A549 (cell line): ENCODE measurements at regions of chr2 and their contacts with region 1.

Region 1: DNA sequence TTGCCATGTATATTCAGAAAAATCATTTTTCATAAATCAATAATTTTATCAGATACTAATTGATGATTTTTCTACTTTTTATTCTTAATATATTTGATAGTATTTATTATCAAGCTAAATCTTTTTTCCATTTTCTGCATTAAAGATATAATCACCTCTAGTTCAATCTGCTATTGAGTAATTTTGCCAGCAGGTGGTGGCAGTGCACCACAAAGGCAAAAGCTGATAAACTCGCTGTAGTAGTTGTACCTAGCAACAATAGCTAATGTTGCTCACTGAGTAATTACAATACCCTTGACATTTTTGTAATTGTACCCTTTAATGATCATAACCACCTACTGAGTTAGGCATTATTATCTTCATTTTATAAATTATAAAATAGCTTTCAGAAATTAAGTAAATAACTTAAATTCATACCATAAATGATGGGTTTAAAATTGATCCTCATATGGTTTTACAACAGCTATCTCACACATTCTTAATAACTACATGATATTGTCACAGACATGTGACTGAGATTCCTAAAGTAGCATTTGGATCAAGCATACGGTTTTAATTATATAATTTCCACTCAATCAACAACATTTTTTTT is 52.0 kb upstream of the CALCRL start:
- DNase-seq: peak; percentile 19 to 74
- ATAC-seq: peak in 1 of 2 experiments; percentile 67; a peak in 3 of 6 replicates
- H3K4me3 ChIP-seq: no peak overlapping the region
- H3K27ac ChIP-seq: peak overlapping the region in 1 of 2 experiments; percentile 75; a peak in 3 of 6 replicates
- H3K4me1 ChIP-seq: peaks cover 52% of the 10 kb centered on the region
- CTCF ChIP-seq: peak; percentile 98
- EP300 ChIP-seq: no peak
- POLR2A ChIP-seq: no peak
- RAD21 ChIP-seq: peak; percentile 99 to 100

Region 2: GRCh38 chr2:187541086-187542085 is 41.3 kb after region 1 on chr2:
- CTCF ChIA-PET with region 1: interaction called, 56 read pairs
- POLR2A ChIA-PET with region 1: interaction called, 3 read pairs
- DNase-seq: peak in 1 of 2 experiments; percentile 96
- ATAC-seq: peak; percentile 80 to 85
- H3K4me3 ChIP-seq: peak overlapping the region; percentile 14; the same call in 2 of the 3 replicates
- H3K27ac ChIP-seq: peak overlapping the region; percentile 92
- H3K4me1 ChIP-seq: peaks cover 64% of the 10 kb centered on the region
- CTCF ChIP-seq: no peak
- EP300 ChIP-seq: peak; percentile 94
- POLR2A ChIP-seq: no peak
- RAD21 ChIP-seq: peak; percentile 20 to 54; a peak in 4 of 5 replicates

Region 3: DNA sequence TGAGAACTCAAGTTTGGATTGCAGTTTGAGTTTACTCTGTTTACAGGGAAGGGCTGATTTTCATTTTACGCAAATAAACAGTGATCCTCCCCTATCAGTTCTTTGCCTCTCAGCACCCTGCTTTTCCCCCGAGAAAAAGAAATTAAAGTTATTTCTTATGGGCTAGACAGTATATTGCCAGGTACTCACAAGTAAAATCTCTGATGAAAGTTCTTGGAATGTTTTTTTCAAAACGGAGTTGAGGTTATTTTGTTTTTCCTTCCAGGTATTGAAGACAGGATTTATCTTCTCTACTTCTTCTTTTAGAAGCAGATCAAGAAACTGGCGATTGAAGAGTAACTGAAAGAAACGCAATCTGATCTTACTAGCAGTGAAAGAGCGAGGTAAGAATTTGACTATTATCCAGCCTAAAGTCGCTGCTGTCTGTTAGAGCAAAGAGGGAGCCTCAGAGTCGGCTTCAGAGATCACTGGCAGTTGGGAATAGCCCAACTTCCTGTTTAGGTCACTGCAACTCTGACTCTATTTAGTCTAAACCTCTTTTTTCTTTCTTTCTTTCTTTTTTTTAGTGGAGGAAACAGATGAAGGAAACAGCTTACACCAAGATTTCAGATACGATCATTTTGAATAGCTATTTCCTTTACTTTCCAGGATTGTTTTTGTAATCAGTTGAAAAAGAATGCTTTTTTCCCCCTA is 54.1 kb after region 1 on chr2 and contains the start of gene TFPI:
- CTCF ChIA-PET with region 1: interaction called, 56 read pairs
- POLR2A ChIA-PET with region 1: interaction called, 5 read pairs
- DNase-seq: peak in 1 of 2 experiments; percentile 70
- ATAC-seq: peak; percentile 79 to 80
- H3K4me3 ChIP-seq: peak within 1 kb of the TSS; percentile 66
- H3K27ac ChIP-seq: peak within 1 kb of the TSS; percentile 89 to 92
- H3K4me1 ChIP-seq: peaks cover 46% of the 10 kb centered on the region
- CTCF ChIP-seq: no peak
- EP300 ChIP-seq: no peak
- POLR2A ChIP-seq: no peak
- RAD21 ChIP-seq: no peak; a peak in 1 of 5 replicates
- polyA plus RNA-seq, gene TFPI: 104 and 107 TPM in 2 replicates

Region 4: GRCh38 chr2:187574969-187575750 is 75.1 kb after region 1 on chr2:
- CTCF ChIA-PET with region 1: interaction called, 324 read pairs
- POLR2A ChIA-PET with region 1: interaction called, 7 read pairs
- DNase-seq: no peak
- ATAC-seq: peak; percentile 30 to 49; a peak in 3 of 6 replicates
- H3K4me3 ChIP-seq: no peak overlapping the region
- H3K27ac ChIP-seq: peak overlapping the region; percentile 61 to 62
- H3K4me1 ChIP-seq: peaks cover 34% of the 10 kb centered on the region
- CTCF ChIP-seq: no peak
- EP300 ChIP-seq: no peak
- POLR2A ChIP-seq: no peak
- RAD21 ChIP-seq: no peak

Region 5: DNA sequence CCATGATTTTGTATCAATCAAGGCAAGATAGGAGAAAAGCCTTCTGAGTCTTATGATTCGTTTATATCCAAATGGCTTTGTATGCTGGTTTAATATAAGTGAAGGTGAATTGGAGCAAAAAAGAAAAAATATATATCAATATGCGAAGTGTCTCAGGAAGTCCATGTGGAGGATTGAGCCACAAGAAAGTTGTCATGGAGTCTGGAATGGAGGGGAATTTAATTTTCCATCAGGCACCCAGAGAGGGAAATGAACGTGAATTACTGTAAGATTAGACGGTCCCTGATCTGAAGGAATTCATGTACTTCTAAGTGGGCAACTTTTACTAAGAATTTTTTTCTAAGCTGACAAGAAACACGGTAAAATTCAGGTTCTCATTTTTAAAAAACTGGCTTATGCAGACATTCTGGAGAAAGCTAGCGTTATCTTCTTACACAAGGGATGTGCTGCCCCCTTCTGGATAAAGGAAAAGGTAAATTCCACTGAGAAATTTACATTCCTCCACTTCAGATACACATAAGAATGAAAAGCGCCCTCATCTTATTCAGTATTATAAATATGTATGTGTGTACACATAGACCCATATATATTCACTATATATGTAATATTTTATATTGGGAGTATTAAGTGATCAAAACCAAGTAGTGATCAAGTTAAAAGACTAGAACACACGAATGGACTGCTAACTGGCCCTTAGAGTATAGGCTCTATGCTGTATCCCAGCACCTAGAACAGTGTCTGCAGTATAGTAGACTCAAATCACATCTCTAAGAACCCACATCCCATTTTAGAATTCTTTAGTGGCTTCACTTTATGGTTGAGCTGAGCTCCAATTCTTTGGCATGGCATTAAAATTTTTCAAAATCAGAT is 343.2 kb after region 1 on chr2:
- CTCF ChIA-PET with region 1: interaction called, 30 read pairs
- POLR2A ChIA-PET with region 1: no interaction called
- DNase-seq: peak; percentile 15 to 79
- ATAC-seq: peak; percentile 80 to 92
- H3K4me3 ChIP-seq: no peak overlapping the region
- H3K27ac ChIP-seq: no peak overlapping the region
- H3K4me1 ChIP-seq: no peaks in the 10 kb centered on the region
- CTCF ChIP-seq: peak; percentile 90
- EP300 ChIP-seq: no peak
- POLR2A ChIP-seq: no peak
- RAD21 ChIP-seq: peak; percentile 85 to 88